A549 (cell line): ENCODE measurements at regions of chr9 and their contacts with region 1.

Region 1: GRCh38 chr9:21789541-21790037 is 12.8 kb upstream of the MTAP start:
- DNase-seq: peak; percentile 74 to 96
- ATAC-seq: peak; percentile 94 to 99
- H3K4me3 ChIP-seq: peak overlapping the region; percentile 27; the same call in 2 of the 3 replicates
- H3K27ac ChIP-seq: peak overlapping the region; percentile 65 to 76
- H3K4me1 ChIP-seq: peaks cover 15% of the 10 kb centered on the region
- CTCF ChIP-seq: peak; percentile 99
- EP300 ChIP-seq: no peak
- POLR2A ChIP-seq: no peak
- RAD21 ChIP-seq: peak; percentile 83 to 99

Region 2: DNA sequence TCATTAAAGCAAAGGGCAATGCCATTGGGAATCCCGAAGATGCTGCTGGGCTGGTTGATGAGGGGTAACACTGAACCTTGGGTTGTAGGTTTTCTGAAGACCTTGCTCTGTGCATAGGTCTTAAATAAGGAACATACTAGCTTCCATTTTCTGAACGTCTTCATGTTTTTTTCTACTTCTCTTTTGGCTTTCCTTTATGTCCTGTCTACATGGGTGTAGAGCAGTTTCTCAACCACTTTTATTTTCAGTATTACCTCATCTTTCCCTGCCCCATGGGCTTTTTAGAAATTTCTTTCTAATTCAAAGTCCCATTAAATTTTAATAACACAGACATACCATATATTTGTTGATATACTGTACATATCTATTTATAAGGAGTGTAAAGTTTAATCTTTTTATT is 549.7 kb before region 1 on chr9 and contains the start of gene IFNA14:
- CTCF ChIA-PET with region 1: interaction called, 12 read pairs
- POLR2A ChIA-PET with region 1: no interaction called
- DNase-seq: no peak
- ATAC-seq: no peak
- H3K4me3 ChIP-seq: no peak within 1 kb of the TSS
- H3K27ac ChIP-seq: no peak within 1 kb of the TSS
- H3K4me1 ChIP-seq: no peaks in the 10 kb centered on the region
- CTCF ChIP-seq: no peak
- EP300 ChIP-seq: no peak
- POLR2A ChIP-seq: no peak
- RAD21 ChIP-seq: no peak
- polyA plus RNA-seq, gene IFNA14: not detected in 2 replicates

Region 3: DNA sequence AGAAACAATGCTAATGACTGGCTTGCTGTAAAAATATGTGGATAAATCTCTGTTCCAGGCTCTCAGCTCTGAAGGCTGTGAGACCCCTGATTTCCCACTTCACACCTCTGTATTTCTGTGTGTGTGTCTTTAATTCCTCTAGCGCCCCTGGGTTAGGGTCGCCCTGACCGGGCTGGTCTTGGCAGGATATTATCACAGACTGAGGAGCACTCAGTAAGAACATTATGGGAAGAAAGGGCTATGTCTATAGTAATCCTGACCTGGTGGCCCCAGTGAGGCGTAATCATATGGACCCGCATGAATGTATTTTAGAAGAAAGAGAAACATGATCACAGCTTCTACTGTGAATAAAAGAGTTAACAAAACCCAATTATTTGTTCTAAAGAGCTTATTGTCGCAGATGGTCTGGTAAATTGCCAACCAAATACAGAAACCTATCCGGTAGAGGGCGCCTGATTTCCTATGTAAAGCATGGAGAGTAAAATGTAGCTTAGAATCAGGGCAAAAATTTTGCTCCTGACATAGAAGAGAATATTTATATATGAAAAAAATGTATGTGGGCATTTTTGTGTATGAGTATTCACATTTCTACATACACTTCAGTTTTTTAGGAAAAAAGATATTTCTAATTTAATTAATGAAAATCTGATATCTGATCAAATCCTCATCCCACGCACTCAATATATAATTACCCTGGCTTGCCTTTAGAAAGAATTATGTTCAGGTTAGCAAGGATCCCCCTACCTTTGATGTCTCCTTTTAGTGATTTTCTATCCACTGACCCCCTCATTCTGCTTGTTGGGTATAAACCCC is 355.2 kb before region 1 on chr9:
- CTCF ChIA-PET with region 1: interaction called, 25 read pairs
- POLR2A ChIA-PET with region 1: no interaction called
- DNase-seq: peak; percentile 28 to 77
- ATAC-seq: peak; percentile 65 to 84; a peak in 4 of 6 replicates
- H3K4me3 ChIP-seq: no peak overlapping the region
- H3K27ac ChIP-seq: no peak overlapping the region
- H3K4me1 ChIP-seq: no peaks in the 10 kb centered on the region
- CTCF ChIP-seq: peak; percentile 86
- EP300 ChIP-seq: no peak
- POLR2A ChIP-seq: no peak
- RAD21 ChIP-seq: peak; percentile 70 to 74

Region 4: GRCh38 chr9:21688108-21689102 is 101.2 kb before region 1 on chr9:
- CTCF ChIA-PET with region 1: interaction called, 12 read pairs
- POLR2A ChIA-PET with region 1: no interaction called
- DNase-seq: peak; percentile 51 to 87
- ATAC-seq: peak; percentile 51 to 66; a peak in 5 of 6 replicates
- H3K4me3 ChIP-seq: peak overlapping the region; percentile 31
- H3K27ac ChIP-seq: peak overlapping the region; percentile 92 to 94
- H3K4me1 ChIP-seq: peaks cover 67% of the 10 kb centered on the region
- CTCF ChIP-seq: no peak
- EP300 ChIP-seq: no peak
- POLR2A ChIP-seq: no peak
- RAD21 ChIP-seq: no peak

Region 5: GRCh38 chr9:21777701-21778100 is 11.9 kb before region 1 on chr9:
- CTCF ChIA-PET with region 1: interaction called, 24 read pairs
- POLR2A ChIA-PET with region 1: no interaction called
- DNase-seq: no peak
- ATAC-seq: no peak
- H3K4me3 ChIP-seq: no peak overlapping the region
- H3K27ac ChIP-seq: no peak overlapping the region
- H3K4me1 ChIP-seq: 0 out of 3 replicates have a peak, but pooled peaks cover 12% of the 10 kb centered on the region
- CTCF ChIP-seq: no peak
- EP300 ChIP-seq: no peak
- POLR2A ChIP-seq: no peak
- RAD21 ChIP-seq: no peak